Activated CD4-positive, alpha-beta T cell treated with anti-CD3 and anti-CD28 coated beads for 36 hours (primary cell): ENCODE measurements at regions of chrX and their contacts with region 1.

Region 1: DNA sequence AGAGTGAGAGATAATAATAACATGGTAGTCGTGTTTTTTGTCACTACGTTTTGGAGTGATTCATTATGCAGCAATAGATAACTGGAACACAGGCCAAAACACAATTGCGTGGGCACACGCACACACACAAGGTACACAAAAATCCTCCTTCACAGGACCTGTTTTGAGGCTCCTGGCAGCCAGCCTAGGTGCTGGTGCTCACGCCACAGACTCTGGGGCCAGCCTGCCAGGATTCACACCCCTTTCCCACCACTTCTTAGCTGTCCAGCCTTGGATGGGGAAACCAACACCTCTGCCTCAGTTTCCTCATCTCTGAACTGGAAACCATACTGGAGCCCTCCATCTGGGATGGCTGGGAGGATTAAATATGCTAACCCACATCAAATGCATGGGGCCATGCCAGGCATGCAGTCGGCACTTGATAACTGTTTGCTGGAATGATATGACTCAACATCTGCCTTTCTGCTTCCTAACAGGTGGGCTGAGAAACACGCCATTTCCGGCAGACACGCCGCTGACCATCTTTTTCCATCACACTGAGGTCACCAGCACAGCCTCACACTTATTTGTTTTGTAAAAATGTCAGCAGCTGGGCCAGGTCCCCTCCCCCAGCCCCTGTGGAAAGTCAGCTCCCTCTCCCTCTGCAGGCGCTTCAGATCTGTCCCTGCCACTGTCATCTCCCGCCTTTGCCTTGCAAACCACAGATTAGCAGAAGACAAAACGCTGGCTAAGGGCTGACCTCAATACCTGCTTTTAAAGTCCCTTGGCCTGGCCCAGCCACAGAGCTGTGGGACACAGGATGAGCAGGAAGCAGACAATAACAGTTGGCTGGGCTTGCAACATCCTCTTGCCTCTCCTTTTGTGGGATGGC is 237.5 kb downstream of the BCOR start:
- DNase-seq: peak; percentile 92
- ATAC-seq: peak; percentile 65
- H3K4me3 Mint-ChIP-seq: peak overlapping the region; percentile 39
- H3K27ac Mint-ChIP-seq: peak overlapping the region; percentile 93
- H3K4me1 Mint-ChIP-seq: peaks cover 54% of the 10 kb centered on the region
- H3K27me3 Mint-ChIP-seq: no peaks in the 10 kb centered on the region

Region 2: DNA sequence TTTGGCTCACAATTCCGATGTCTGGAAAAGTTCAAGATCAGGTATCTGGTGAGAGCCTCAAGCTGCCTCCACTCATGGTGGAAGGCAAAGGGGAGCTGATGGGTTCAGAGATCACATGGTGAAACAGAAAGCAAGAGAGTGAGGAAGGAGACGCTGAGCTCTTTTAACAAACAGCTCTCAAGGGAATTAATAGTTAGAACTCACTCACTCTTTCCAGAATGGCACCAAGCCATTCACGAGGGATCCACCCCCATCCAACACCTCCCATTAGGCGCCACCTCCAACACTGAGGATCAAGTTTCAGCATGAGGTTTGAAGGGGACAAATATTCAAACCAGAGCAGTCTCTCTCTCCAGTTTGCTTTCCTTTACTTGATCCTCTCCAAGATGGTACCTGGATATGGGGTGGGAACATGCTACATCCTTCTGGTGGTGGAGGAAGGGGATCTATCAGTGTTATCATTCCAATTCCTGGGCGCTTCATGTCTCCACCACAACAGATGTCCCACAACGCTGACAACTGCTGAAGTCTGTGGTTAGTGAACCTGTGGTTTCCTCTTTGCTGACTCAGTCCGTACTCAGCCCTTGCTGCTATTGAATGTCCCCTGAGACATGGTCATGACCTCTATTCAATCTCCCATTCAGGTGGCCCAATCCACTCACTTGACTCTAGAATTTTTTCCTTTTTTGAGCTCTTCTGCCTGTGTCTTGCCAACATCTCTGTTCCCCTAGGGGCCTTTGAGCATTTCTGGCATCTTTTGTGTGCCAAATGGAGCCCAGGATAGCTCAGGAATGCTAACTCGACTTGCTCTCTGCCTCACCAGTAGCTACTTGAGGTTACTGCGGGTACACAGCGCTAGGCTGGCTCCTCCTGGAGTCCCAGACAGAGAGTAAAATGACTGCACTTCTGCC is 663.8 kb before region 1 on chrX:
- CTCF ChIA-PET with region 1: no interaction called
- POLR2A ChIA-PET with region 1: no interaction called
- intact Hi-C with region 1: loop called in 1 of 2 experiments (anchors 10 kb)
- DNase-seq: peak; percentile 69
- ATAC-seq: peak; percentile 85
- H3K4me3 Mint-ChIP-seq: peak overlapping the region; percentile 44
- H3K27ac Mint-ChIP-seq: peak overlapping the region; percentile 76
- H3K4me1 Mint-ChIP-seq: peaks cover 47% of the 10 kb centered on the region
- H3K27me3 Mint-ChIP-seq: peaks cover 2% of the 10 kb centered on the region

Region 3: GRCh38 chrX:39613482-39613921 is 246.7 kb before region 1 on chrX:
- CTCF ChIA-PET with region 1: no interaction called
- POLR2A ChIA-PET with region 1: no interaction called
- intact Hi-C with region 1: loop called in 1 of 2 experiments (anchors 10 kb)
- DNase-seq: peak; percentile 47
- ATAC-seq: peak; percentile 30
- H3K4me3 Mint-ChIP-seq: peak overlapping the region; percentile 77
- H3K27ac Mint-ChIP-seq: peak overlapping the region; percentile 89
- H3K4me1 Mint-ChIP-seq: peaks cover 33% of the 10 kb centered on the region
- H3K27me3 Mint-ChIP-seq: no peaks in the 10 kb centered on the region

Region 4: GRCh38 chrX:39814391-39814790 is 45.8 kb before region 1 on chrX:
- CTCF ChIA-PET with region 1: interaction called, 7 read pairs
- POLR2A ChIA-PET with region 1: interaction called, 5 read pairs
- intact Hi-C with region 1: loop called (anchors 1 to 2 kb)
- DNase-seq: peak; percentile 58
- ATAC-seq: no peak
- H3K4me3 Mint-ChIP-seq: no peak overlapping the region
- H3K27ac Mint-ChIP-seq: no peak overlapping the region
- H3K4me1 Mint-ChIP-seq: peaks cover 29% of the 10 kb centered on the region
- H3K27me3 Mint-ChIP-seq: no peaks in the 10 kb centered on the region

Region 5: GRCh38 chrX:39836802-39837420 is 23.3 kb before region 1 on chrX:
- CTCF ChIA-PET with region 1: no interaction called
- POLR2A ChIA-PET with region 1: no interaction called
- intact Hi-C with region 1: no loop called
- DNase-seq: peak; percentile 27
- ATAC-seq: peak; percentile 77
- H3K4me3 Mint-ChIP-seq: no peak overlapping the region
- H3K27ac Mint-ChIP-seq: no peak overlapping the region
- H3K4me1 Mint-ChIP-seq: peaks cover 4% of the 10 kb centered on the region
- H3K27me3 Mint-ChIP-seq: no peaks in the 10 kb centered on the region

Region 6: GRCh38 chrX:39903937-39904336 is 43.7 kb after region 1 on chrX:
- CTCF ChIA-PET with region 1: no interaction called
- POLR2A ChIA-PET with region 1: interaction called, 3 read pairs
- intact Hi-C with region 1: loop called in 1 of 2 experiments (anchors 1 kb)
- DNase-seq: peak; percentile 53
- ATAC-seq: peak; percentile 87
- H3K4me3 Mint-ChIP-seq: no peak overlapping the region
- H3K27ac Mint-ChIP-seq: no peak overlapping the region
- H3K4me1 Mint-ChIP-seq: peaks cover 32% of the 10 kb centered on the region
- H3K27me3 Mint-ChIP-seq: peaks cover 4% of the 10 kb centered on the region

Region 7: DNA sequence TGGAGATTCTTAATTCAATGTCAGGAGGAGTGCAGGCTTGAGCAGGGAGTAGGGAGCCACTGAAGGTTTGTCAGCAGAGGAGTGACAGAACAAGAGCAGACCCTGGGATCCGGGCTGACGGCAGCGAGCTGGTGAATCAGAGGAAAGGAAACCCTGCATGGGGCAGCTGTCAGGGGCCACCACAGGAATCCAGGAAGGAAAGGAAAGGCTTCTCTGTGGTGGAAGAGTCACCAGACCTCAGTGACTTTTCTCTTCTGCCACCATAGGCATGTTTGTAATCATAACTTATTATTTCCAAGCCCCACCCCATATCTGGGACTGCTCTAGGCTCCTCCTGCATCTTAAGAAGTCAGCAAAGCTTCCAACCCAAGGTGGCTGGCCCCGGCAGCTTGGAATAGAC is 86.6 kb after region 1 on chrX:
- CTCF ChIA-PET with region 1: no interaction called
- POLR2A ChIA-PET with region 1: no interaction called
- intact Hi-C with region 1: no loop called
- DNase-seq: no peak
- ATAC-seq: peak; percentile 26
- H3K4me3 Mint-ChIP-seq: no peak overlapping the region
- H3K27ac Mint-ChIP-seq: no peak overlapping the region
- H3K4me1 Mint-ChIP-seq: peaks cover 5% of the 10 kb centered on the region
- H3K27me3 Mint-ChIP-seq: no peaks in the 10 kb centered on the region

Region 8: DNA sequence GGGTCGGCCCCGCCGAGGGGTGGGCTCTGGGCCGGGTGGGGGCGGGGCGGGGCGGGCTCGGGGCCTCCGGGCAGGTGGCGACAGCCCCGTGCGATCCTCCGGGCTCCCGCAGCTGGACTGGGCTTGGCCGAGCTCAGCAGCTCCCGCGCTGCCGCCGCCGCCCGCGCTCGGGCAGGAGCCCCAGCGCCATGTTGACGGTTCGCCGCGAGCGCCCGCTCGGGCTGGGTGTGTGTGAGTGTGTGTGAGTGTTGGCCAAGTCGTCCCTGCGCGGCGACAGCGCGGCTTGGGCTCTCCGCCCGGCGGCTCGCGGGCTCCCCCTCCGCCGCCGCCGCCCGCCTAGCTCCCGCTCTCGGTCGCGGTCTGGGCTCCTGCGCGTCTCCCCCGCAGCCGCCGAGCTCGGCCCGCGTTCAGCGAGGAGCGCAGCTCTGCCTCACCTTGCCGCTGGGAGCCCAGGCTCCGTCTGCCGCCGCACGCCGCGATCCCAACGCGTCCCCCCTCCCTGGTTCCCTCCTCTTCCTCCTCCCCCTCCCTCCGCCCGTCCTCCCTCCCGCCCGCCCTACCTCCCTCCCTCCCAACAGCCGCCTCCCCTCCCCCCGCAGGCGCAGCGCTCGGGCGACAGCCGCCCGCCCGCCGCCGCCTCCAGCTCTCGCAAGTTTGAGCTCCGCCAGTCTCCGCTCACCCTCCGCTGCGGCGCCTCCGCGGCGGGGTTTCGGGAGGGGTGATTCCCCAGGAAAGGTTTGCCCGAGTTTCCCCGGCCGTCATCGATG is 237.5 kb after region 1 on chrX and contains the start of gene BCOR:
- CTCF ChIA-PET with region 1: no interaction called
- POLR2A ChIA-PET with region 1: no interaction called
- intact Hi-C with region 1: loop called (anchors 1 to 5 kb)
- DNase-seq: peak; percentile 88
- ATAC-seq: peak; percentile 40
- H3K4me3 Mint-ChIP-seq: peak within 1 kb of the TSS; percentile 86
- H3K27ac Mint-ChIP-seq: peak within 1 kb of the TSS; percentile 77
- H3K4me1 Mint-ChIP-seq: peaks cover 22% of the 10 kb centered on the region
- H3K27me3 Mint-ChIP-seq: no peaks in the 10 kb centered on the region
- total RNA-seq, gene BCOR: 34.7 to 51.1 TPM

Region 9: DNA sequence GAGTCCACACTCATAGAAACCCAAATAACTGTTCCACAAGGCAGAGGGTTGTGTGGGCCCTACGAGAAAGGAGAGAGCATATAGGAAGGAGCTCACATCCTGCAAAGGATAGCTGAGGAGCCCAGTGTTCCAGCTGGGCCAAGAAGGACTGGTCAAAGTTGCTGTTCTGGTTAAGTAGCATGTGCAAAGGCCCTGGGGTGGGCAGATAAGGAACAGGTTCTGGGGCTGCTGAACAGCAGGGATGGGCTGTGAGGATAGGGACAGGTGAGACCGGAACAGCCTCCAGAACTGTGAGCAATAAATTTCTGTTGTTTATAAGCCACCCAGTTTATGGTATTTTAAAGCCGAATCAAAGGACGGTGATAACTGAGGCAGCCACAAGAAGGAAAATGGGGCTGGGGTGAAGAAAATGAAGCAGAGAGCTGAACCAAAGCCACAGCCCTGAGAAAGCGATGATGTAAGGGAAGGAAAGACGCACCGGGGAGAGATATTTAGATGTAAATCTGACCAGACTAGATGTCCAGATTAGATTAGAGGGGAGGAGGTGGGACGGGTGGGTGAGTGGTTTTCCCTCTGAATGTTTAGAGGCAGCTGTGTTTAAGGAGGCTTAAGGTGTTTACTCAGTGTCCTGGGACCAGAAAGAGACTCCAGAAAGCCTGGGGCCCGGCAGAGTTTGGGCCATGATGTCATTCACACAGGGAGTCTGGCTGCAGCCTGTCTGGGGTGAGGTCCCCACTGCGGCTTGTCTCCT is 418.3 kb after region 1 on chrX:
- CTCF ChIA-PET with region 1: no interaction called
- POLR2A ChIA-PET with region 1: no interaction called
- intact Hi-C with region 1: no loop called
- DNase-seq: peak; percentile 71
- ATAC-seq: peak; percentile 82
- H3K4me3 Mint-ChIP-seq: no peak overlapping the region
- H3K27ac Mint-ChIP-seq: no peak overlapping the region
- H3K4me1 Mint-ChIP-seq: peaks cover 25% of the 10 kb centered on the region
- H3K27me3 Mint-ChIP-seq: no peaks in the 10 kb centered on the region